Activated CD4-positive, alpha-beta T cell treated with anti-CD3 and anti-CD28 coated beads, Interleukin-2, amount 10 ng/mL, durations not matched to agents 24 days and 14 days (primary cell): ENCODE measurements at regions of chr7 and their contacts with region 1.

Region 1: GRCh38 chr7:100852048-100852872 is at the start of gene SLC12A9:
- DNase-seq: peak; percentile 97
- H3K4me3 Mint-ChIP-seq: peak within 1 kb of the TSS; percentile 95
- H3K27ac Mint-ChIP-seq: peak within 1 kb of the TSS; percentile 82
- H3K4me1 Mint-ChIP-seq: peaks cover 12% of the 10 kb centered on the region
- H3K27me3 Mint-ChIP-seq: no peaks in the 10 kb centered on the region
- total RNA-seq, gene SLC12A9: 37.3 and 41.2 TPM in 2 replicates

Region 2: DNA sequence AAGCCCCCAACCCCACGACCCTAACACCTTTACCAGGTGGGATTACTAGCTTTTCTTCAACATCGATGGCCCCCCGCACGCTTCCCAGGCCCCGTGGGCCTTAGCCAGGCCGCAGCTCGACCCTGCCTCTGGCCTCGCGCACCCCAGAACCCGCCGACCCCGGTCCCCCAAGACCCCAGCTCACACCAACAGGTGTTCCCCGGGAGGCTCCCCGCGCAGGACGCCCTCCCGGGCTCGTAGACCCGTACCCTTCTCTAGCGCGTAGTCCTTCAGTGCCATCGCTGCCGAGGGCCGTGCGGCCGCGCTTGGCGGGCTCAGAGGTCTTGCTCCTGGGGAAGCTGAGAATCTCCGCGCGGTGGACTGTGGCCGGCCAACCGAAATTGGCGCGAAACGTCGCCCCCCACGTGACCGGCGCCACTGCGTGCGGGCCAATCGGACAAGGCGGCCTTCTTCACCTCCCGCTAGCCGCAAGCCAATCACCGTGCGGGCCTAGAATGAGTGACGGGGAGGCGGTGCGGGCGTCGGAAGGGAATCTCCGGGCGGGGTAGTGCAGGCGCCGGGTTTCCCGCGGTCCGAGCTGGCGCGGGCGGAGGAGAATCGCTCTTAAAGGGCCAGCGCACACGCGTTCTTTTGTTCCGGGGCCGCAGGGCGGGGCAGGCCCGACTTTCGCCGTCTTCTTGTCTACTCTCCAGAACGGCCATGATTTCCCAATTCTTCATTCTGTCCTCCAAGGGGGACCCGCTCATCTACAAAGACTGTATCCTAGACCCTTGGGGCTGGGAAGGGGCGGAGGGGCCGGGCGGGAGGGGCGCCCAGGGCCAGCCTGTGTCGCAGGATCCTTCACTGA is 751.0 kb before region 1 on chr7 and contains the starts of genes AP4M1 and MCM7:
- intact Hi-C with region 1: loop called (anchors 1 kb)
- DNase-seq: peak; percentile 99
- H3K4me3 Mint-ChIP-seq: peak within 1 kb of the TSS; percentile 94
- H3K27ac Mint-ChIP-seq: peak within 1 kb of the TSS; percentile 94
- H3K4me1 Mint-ChIP-seq: peaks cover 35% of the 10 kb centered on the region
- H3K27me3 Mint-ChIP-seq: no peaks in the 10 kb centered on the region
- total RNA-seq, gene AP4M1: 13.5 and 16.4 TPM in 2 replicates
- total RNA-seq, gene MCM7: 464 and 469 TPM in 2 replicates

Region 3: DNA sequence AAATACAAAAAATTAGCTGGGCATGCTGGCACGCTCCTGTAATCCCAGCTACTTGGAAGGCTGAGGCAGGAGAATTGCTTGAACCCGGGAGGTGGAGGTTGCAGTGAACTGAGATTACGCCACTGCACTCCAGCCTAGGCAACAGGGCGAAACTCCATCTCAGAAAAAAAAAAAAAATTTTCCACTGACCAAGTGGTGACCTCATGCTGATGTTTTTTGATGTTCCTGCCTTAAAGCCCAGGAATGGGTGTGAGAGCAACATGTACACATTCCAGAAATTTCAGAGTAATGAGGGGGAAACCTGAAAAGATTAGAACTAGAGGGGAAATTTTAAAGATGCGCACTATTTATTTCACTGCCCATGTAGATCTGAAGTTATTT is 348.9 kb before region 1 on chr7:
- intact Hi-C with region 1: no loop called
- DNase-seq: no peak
- H3K4me3 Mint-ChIP-seq: no peak overlapping the region
- H3K27ac Mint-ChIP-seq: no peak overlapping the region
- H3K4me1 Mint-ChIP-seq: no peaks in the 10 kb centered on the region
- H3K27me3 Mint-ChIP-seq: peaks cover 9% of the 10 kb centered on the region

Region 4: GRCh38 chr7:100632951-100633717 is 219.1 kb before region 1 on chr7:
- intact Hi-C with region 1: loop called (anchors 5 kb)
- DNase-seq: peak; percentile 90
- H3K4me3 Mint-ChIP-seq: peak overlapping the region; percentile 92
- H3K27ac Mint-ChIP-seq: peak overlapping the region; percentile 98
- H3K4me1 Mint-ChIP-seq: peaks cover 32% of the 10 kb centered on the region
- H3K27me3 Mint-ChIP-seq: no peaks in the 10 kb centered on the region

Region 5: GRCh38 chr7:100705753-100706671 is 146.2 kb before region 1 on chr7 and contains the start of gene POP7:
- intact Hi-C with region 1: loop called (anchors 1 kb)
- DNase-seq: peak; percentile 100
- H3K4me3 Mint-ChIP-seq: peak within 1 kb of the TSS; percentile 99
- H3K27ac Mint-ChIP-seq: peak within 1 kb of the TSS; percentile 98
- H3K4me1 Mint-ChIP-seq: peaks cover 13% of the 10 kb centered on the region
- H3K27me3 Mint-ChIP-seq: peaks cover 7% of the 10 kb centered on the region
- total RNA-seq, gene POP7: 77.3 and 77.7 TPM in 2 replicates

Region 6: GRCh38 chr7:100799014-100799896 is 53.0 kb before region 1 on chr7:
- intact Hi-C with region 1: loop called (anchors 1 kb)
- DNase-seq: peak; percentile 87
- H3K4me3 Mint-ChIP-seq: no peak overlapping the region
- H3K27ac Mint-ChIP-seq: no peak overlapping the region
- H3K4me1 Mint-ChIP-seq: peaks cover 8% of the 10 kb centered on the region
- H3K27me3 Mint-ChIP-seq: no peaks in the 10 kb centered on the region

Region 7: DNA sequence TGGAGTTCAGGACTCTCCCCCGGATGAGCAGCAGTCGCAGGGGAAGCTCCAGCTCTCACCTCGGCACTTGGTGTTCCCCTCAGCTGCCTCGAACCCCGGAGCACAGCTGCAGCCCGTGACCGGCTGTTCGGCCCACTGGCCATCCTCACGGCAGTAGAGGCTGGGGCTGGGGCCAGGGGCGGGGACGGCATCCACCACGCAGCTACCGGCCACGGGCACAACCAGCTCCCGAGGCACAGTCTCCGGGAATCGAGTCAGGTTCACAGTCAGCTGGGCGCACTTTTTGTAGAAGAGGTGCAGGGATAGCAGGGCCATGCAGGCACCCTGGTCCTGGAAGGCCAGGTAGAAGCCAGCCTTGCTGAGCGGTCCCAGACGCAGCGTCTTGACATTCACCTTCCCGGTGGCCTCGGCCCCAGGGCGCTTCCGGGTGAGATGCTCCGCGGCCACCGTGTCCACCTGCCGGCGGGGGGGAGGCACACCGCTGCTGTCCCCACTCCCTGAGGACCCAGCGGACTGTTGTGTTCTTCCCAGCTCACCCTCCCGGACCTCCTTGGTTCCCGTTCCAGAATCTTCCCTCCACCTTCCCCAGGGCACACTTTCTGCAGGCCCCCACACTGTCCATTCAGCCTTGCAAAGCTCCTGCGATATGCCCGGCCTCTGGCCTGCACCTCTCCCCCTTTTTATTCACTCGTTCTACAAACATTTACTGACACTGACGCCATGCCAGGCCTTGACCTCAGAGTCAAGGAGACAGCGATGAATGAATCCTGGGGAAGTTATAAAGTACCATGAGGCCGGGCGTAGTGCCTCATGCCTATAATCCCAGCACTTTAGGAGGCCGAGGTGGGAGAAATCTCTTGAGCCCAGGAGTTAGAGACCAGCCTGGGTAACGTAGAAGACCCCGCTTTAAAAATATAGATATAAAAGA is 29.8 kb before region 1 on chr7:
- intact Hi-C with region 1: no loop called
- DNase-seq: no peak
- H3K4me3 Mint-ChIP-seq: no peak overlapping the region
- H3K27ac Mint-ChIP-seq: no peak overlapping the region
- H3K4me1 Mint-ChIP-seq: peaks cover 10% of the 10 kb centered on the region
- H3K27me3 Mint-ChIP-seq: peaks cover 21% of the 10 kb centered on the region

Region 8: GRCh38 chr7:100867040-100867775 is 14.9 kb after region 1 on chr7 and contains the start of gene TRIP6:
- intact Hi-C with region 1: loop called (anchors 1 kb)
- DNase-seq: peak; percentile 89
- H3K4me3 Mint-ChIP-seq: peak within 1 kb of the TSS; percentile 99
- H3K27ac Mint-ChIP-seq: peak within 1 kb of the TSS; percentile 98
- H3K4me1 Mint-ChIP-seq: peaks cover 12% of the 10 kb centered on the region
- H3K27me3 Mint-ChIP-seq: no peaks in the 10 kb centered on the region
- total RNA-seq, gene TRIP6: 42.7 and 47.6 TPM in 2 replicates

Region 9: GRCh38 chr7:100874577-100875355 is 22.5 kb after region 1 on chr7 and contains the start of gene SRRT:
- intact Hi-C with region 1: loop called (anchors 1 kb)
- DNase-seq: peak; percentile 100
- H3K4me3 Mint-ChIP-seq: peak within 1 kb of the TSS; percentile 98
- H3K27ac Mint-ChIP-seq: peak within 1 kb of the TSS; percentile 98
- H3K4me1 Mint-ChIP-seq: peaks cover 50% of the 10 kb centered on the region
- H3K27me3 Mint-ChIP-seq: no peaks in the 10 kb centered on the region
- total RNA-seq, gene SRRT: 300 and 318 TPM in 2 replicates